ENCODE measurements at regions of chr22 and their contacts with region 1.

Region 1: DNA sequence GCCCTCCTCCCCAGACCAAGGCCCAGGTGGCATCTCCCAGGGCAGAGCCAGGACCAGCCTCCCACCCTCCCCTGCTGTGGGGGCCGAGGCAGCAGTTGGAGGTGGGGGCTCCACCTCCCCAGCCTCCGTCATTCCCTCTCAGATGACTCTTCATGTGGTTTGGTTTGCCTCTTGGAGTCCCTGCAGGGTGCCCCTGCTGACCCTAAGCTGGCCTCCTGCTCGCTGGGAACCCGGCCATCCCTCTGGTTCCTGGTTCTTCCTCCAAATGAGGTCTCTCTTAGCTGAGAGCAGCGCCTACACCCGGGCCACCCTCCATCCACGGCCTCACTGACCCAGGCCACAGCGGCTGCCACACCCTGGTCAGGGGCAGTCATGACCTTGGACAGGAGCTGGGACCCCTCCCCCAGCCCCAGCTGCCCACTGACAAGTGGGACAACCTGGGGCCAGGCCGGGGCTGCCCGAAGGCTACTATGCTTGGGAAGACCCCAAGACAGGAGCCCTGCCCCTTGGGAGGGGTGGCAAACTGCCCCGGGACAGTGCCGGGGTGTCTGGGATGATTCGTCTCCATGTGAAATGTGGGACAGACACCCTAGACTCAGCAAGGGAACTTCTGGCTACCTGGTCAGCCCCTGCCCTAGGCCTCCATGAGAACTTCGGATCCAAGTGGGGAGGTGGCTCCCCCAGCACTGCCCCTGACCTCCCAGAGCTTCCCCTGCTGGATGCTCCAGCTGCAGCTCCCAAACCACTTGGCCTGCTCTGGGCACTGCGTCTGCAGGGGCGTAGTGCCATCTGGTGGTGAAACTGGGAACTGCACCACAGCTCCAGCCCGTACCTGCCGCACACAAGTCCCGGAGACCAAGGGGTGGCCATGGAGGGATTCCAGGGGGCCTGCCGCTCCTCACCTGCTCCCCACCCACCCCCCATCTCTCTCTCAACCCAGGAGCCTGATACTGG is 194.5 kb downstream of the IGLL1 start:
- DNase-seq: peak; percentile 46 to 62
- ATAC-seq: peak; percentile 78 to 88
- H3K4me3 ChIP-seq: no peak overlapping the region
- H3K27ac ChIP-seq: no peak overlapping the region
- H3K4me1 ChIP-seq: no peaks in the 10 kb centered on the region
- H3K27me3 ChIP-seq: no peaks in the 10 kb centered on the region
- CTCF ChIP-seq: peak; percentile 91 to 99 (median 96)
- POLR2A ChIP-seq: no peak

Region 2: DNA sequence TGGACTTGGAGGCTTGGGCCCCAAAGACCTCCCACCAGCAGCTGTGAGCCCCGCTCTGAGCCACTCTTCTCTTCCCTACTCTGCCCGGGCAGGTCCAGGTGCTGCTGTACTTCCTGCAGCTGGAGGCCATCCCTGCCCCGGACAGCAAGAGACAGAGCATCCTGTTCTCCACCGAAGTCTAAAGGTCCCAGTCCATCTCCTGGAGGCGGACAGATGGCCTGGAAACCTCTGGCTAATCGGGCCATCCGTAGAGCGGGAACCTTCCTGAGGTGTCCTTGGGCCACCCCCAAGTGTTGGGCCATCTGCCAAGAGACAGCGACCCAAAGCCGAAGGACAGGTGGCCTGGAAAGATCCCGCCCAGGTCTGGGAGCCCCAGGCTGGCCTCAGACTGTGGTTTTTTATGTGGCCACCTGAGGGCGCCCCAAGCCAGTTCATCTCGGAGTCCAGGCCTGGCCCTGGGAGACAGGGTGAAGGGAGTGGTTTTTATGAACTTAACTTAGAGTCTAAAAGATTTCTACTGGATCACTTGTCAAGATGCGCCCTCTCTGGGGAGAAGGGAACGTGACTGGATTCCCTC is 70.1 kb before region 1 on chr22:
- in situ Hi-C with region 1: no loop called
- intact Hi-C with region 1: loop called (anchors 2 kb)
- DNase-seq: peak in 1 of 2 donors; percentile 31
- ATAC-seq: no peak
- H3K4me3 ChIP-seq: no peak overlapping the region
- H3K27ac ChIP-seq: no peak overlapping the region
- H3K4me1 ChIP-seq: no peaks in the 10 kb centered on the region
- H3K27me3 ChIP-seq: no peaks in the 10 kb centered on the region
- CTCF ChIP-seq: peak; percentile 25 to 73 (median 54)
- POLR2A ChIP-seq: no peak

Region 3: GRCh38 chr22:23353004-23353403 is 32.6 kb before region 1 on chr22:
- in situ Hi-C with region 1: no loop called
- intact Hi-C with region 1: no loop called
- DNase-seq: no peak
- ATAC-seq: no peak
- H3K4me3 ChIP-seq: no peak overlapping the region
- H3K27ac ChIP-seq: no peak overlapping the region
- H3K4me1 ChIP-seq: no peaks in the 10 kb centered on the region
- H3K27me3 ChIP-seq: peaks cover 0 to 24% (median 0%) of the 10 kb centered on the region in 3 donors
- CTCF ChIP-seq: no peak
- POLR2A ChIP-seq: no peak

Region 4: DNA sequence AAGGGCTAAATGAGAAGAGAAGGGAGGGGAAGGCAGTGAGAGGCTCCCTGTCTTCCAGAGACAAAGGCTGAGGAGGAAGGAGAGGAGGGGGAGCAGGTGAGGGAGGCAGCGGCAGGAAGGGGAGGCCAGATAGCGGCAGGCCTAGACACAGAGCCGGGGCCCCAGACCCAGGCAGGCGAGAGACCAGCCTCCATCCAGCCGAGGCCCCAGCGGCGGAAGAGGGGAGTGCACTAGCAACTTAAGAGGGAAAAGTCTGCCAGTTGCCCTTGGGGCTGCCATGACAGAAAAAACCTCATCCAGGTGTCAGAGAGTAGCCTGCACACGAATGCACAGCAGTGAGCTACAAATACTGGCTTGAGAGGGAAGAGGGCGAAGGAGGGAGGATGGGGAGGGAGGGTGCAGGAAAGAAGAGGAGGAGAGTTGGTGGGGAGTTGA is 147.8 kb after region 1 on chr22:
- in situ Hi-C with region 1: no loop called
- intact Hi-C with region 1: no loop called
- DNase-seq: no peak
- ATAC-seq: no peak
- H3K4me3 ChIP-seq: no peak overlapping the region
- H3K27ac ChIP-seq: no peak overlapping the region
- H3K4me1 ChIP-seq: no peaks in the 10 kb centered on the region
- H3K27me3 ChIP-seq: no peaks in the 10 kb centered on the region
- CTCF ChIP-seq: no peak
- POLR2A ChIP-seq: no peak